ENCODE measurements at regions of chr9 and their contacts with region 1.

Region 1: GRCh38 chr9:34025062-34025461 is 23.6 kb downstream of the UBAP2 start:
- DNase-seq: no peak
- H3K4me3 Mint-ChIP-seq: no peak overlapping the region
- H3K27ac Mint-ChIP-seq: no peak overlapping the region
- H3K4me1 Mint-ChIP-seq: peaks cover 8% of the 10 kb centered on the region
- H3K27me3 Mint-ChIP-seq: no peaks in the 10 kb centered on the region
- CTCF ChIP-seq: no peak

Region 2: GRCh38 chr9:33737811-33738606 is 287.1 kb before region 1 on chr9:
- CTCF ChIA-PET with region 1: no interaction called
- POLR2A ChIA-PET with region 1: no interaction called
- intact Hi-C with region 1: loop called (anchors 5 kb)
- DNase-seq: peak; percentile 71
- H3K4me3 Mint-ChIP-seq: no peak overlapping the region
- H3K27ac Mint-ChIP-seq: peak overlapping the region; percentile 14
- H3K4me1 Mint-ChIP-seq: peaks cover 23% of the 10 kb centered on the region
- H3K27me3 Mint-ChIP-seq: no peaks in the 10 kb centered on the region
- CTCF ChIP-seq: peak; percentile 88

Region 3: DNA sequence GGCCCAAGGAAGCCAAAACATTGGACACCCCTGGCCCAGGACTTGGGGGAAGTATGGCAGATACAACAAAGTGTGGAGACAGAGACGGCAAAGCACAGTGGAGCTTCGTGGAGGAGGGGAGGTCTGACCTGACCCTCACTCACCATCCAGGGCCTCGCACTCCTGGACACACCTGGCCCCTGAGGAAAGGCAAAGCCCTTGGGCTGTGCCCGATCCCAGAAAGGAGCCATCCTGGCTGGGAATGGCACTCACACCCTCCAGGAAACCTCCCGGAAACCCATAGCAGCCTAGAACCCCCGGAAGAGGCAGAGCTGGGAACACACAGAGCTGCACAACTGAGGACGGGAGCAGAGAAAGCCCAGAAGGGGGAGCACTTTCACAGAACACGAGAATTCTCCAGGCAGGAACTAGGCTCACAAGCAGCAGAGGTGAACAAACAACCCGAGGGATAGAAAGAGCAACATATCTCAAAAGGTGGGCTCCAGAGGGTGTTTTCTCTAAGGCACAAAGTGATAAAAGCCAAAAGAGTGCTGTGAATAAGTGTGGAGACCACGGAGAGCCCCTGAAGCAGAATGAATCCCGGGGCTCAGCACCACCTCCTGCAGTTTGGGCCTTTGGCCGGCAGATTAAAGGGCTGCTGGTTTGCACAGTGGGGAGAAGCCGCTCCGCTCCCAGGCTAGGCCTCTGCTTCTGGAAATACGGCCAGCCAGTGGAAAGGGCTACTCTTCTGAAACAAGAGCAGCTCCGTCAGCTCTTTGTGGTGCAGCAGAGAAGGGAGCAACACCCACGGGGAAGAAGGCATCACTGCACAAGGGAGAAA is 99.9 kb before region 1 on chr9:
- CTCF ChIA-PET with region 1: no interaction called
- POLR2A ChIA-PET with region 1: no interaction called
- intact Hi-C with region 1: loop called (anchors 5 kb)
- DNase-seq: peak; percentile 67
- H3K4me3 Mint-ChIP-seq: no peak overlapping the region
- H3K27ac Mint-ChIP-seq: no peak overlapping the region
- H3K4me1 Mint-ChIP-seq: no peaks in the 10 kb centered on the region
- H3K27me3 Mint-ChIP-seq: no peaks in the 10 kb centered on the region
- CTCF ChIP-seq: peak; percentile 43